ENCODE measurements at regions of chr18 and their contacts with region 1.

Region 1: GRCh38 chr18:62982600-62983251 is 267.4 kb downstream of the PHLPP1 start:
- DNase-seq: peak; percentile 43 to 53 (median 48)
- H3K4me3 ChIP-seq: peak overlapping the region in 5 of 7 experiments; percentile 21 to 70 (median 58)
- H3K27ac ChIP-seq: no peak overlapping the region
- H3K4me1 ChIP-seq: peaks cover 0 to 8% (median 4%) of the 10 kb centered on the region in 4 experiments
- H3K27me3 ChIP-seq: no peaks in the 10 kb centered on the region

Region 2: DNA sequence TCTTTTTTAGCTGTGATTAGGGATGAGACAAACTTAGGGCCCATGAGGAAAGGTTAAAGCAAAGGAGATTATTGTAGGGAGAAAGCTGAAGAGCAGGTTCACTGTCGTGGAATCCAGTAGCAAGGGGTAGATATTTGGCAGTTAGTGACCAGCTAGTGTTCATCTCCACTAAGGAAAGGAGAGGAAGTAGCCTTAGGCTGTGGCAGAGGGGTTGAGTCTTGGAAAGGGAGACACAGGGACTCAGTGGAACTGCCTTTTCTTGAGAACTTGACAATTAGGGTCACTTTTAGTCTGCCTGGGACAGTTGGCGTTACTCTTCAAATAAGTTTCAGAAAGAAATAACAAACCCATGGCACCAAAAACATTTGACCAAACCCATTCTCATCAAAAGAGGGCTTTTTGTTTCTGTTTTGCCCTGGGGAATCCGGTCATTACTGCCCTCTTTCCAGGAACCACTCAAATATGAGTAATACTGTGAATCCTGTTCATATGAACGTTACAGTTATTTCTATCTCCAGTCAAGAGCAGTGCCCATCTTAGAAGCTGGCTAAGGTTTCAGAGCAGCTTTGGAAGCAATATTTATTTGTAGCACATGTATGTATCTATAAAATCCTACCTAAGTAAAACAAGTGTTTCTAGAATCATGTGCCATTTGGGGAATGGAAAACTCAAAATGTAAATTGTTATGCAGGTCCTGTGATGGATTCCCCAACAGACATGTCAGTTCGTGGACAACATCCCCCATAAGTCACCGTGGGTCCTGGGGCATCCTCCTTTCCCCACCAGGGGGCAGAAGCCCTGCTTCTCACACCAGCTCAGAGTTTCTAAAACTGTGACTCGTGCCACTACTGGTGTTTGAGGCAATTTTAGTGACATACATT is 344.7 kb before region 1 on chr18:
- CTCF ChIA-PET with region 1: interaction called, 27 read pairs
- POLR2A ChIA-PET with region 1: no interaction called
- DNase-seq: peak; percentile 67 to 81 (median 75)
- H3K4me3 ChIP-seq: no peak overlapping the region
- H3K27ac ChIP-seq: no peak overlapping the region
- H3K4me1 ChIP-seq: no peaks in the 10 kb centered on the region
- H3K27me3 ChIP-seq: no peaks in the 10 kb centered on the region

Region 3: GRCh38 chr18:62925031-62925688 is 57.6 kb before region 1 on chr18:
- CTCF ChIA-PET with region 1: no interaction called
- POLR2A ChIA-PET with region 1: no interaction called
- DNase-seq: no peak
- H3K4me3 ChIP-seq: no peak overlapping the region
- H3K27ac ChIP-seq: no peak overlapping the region
- H3K4me1 ChIP-seq: no peaks in the 10 kb centered on the region
- H3K27me3 ChIP-seq: no peaks in the 10 kb centered on the region

Region 4: DNA sequence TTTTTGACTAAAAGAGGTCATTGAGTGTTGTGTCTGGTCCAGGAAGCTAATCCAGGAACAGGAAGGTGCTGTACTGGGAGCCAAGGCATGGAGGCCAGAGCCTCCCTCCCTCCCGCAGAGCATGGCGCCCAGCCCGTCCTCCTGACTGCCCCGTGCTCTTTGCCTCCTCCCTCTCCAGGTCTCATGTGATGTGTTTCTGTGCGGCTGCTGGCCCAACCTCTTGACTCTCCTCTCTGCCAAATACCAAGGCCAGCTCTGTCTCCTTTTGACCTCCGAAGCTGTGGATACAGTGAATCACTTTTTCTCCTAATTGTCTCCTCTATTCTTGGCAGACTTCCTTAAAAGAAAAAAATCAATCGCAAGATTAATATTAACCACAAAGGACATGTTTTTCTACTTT is 16.7 kb after region 1 on chr18:
- CTCF ChIA-PET with region 1: interaction called, 12 read pairs
- POLR2A ChIA-PET with region 1: no interaction called
- DNase-seq: no peak
- H3K4me3 ChIP-seq: no peak overlapping the region
- H3K27ac ChIP-seq: no peak overlapping the region
- H3K4me1 ChIP-seq: no peaks in the 10 kb centered on the region
- H3K27me3 ChIP-seq: no peaks in the 10 kb centered on the region

Region 5: GRCh38 chr18:63043516-63043915 is 60.8 kb after region 1 on chr18:
- CTCF ChIA-PET with region 1: no interaction called
- POLR2A ChIA-PET with region 1: no interaction called
- DNase-seq: no peak
- H3K4me3 ChIP-seq: no peak overlapping the region
- H3K27ac ChIP-seq: no peak overlapping the region
- H3K4me1 ChIP-seq: peaks cover 0 to 11% (median 7%) of the 10 kb centered on the region in 4 experiments
- H3K27me3 ChIP-seq: no peaks in the 10 kb centered on the region